Activated CD4-positive, alpha-beta T cell treated with anti-CD3 and anti-CD28 coated beads, Interleukin-2, amount 10 ng/mL, durations not matched to agents 24 days and 14 days (primary cell): ENCODE measurements at regions of chr7 and their contacts with region 1.

Region 1: DNA sequence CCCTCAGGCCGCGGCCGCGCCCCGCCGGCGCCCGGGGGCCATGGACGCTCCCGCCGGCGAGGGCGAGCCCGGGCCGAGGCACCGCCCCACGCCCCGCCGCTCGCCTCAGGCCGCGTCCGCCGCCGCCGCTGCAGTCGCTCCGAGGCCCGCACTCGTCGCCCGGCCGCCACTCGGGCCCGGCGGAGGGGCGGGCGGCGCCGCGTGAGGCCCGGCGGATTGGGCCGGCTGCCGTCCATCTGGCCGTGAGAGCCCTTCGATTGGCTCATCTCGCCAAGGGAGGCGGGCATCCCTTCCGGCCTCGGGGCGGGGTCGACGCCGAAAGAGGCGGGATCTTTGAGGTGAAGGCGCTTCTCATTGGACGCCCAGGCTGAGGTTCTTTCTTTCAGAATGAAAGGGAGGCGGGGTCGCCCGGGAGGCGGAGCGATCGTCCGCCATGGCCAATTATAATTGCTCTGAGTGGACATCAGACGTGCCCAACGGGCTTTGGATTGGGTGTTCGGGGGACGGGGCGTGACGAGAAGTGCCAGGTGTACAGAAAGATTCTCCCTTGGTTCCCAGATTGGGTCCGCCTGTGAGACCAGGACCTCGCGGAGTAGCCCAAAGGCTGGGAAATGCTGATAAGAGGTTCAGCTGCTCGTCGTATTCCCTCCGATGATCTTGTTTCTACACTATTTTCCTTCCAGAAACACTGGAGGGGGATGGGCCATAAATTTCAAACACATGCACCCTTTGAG is at the start of gene GNA12:
- DNase-seq: peak; percentile 100
- H3K4me3 Mint-ChIP-seq: peak within 1 kb of the TSS; percentile 85
- H3K27ac Mint-ChIP-seq: peak within 1 kb of the TSS; percentile 71
- H3K4me1 Mint-ChIP-seq: peaks cover 39% of the 10 kb centered on the region
- H3K27me3 Mint-ChIP-seq: no peaks in the 10 kb centered on the region
- total RNA-seq, gene GNA12: 30.6 and 31.0 TPM in 2 replicates

Region 2: DNA sequence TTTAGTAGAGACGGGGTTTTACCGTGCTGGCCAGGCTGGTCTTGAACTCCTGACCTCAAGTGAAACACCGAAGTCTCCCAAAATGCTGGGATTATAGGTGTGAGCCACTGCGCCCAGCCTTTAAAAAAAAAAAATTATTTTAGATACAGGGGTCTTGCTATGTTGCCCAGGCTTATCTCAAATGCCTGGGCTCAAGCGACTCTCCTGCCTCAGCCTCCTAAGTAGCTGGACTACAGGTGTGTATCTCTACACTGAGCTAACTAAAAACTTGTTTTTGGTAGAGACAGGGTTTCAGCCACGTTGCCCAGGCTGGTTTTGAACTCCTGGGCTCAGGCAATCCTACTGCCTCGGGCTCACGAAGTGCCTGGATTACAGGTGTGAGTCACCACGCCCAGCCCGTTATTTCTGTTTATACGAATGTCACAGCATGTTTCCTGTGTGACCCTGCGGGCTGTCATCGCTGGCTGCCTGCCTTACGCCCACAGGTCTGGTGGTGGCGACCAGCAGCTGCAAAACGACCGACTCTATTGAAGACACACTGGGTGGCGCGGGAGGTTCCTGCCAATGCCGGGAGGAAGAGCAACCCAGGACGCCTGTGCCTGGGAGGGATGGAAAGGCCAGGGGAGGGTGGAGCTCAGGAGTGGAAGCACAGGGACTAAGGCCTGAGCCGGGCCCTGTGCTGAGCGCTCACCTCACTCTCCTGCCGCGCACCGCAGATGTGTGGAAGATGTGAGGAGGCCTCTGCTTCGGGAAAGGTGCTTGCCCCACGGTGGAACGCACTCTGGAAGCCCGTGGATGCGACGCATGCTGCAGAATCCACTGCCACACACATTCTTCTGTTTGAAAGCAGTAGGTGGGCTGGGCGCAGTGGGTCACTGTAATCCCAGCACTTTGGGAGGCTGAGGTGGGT is 123.5 kb before region 1 on chr7:
- intact Hi-C with region 1: loop called (anchors 5 kb)
- DNase-seq: peak; percentile 86
- H3K4me3 Mint-ChIP-seq: peak overlapping the region; percentile 40
- H3K27ac Mint-ChIP-seq: peak overlapping the region; percentile 83
- H3K4me1 Mint-ChIP-seq: peaks cover 42% of the 10 kb centered on the region
- H3K27me3 Mint-ChIP-seq: no peaks in the 10 kb centered on the region